PC-3 (cell line): ENCODE measurements at regions of chr2 and their contacts with region 1.

Region 1: DNA sequence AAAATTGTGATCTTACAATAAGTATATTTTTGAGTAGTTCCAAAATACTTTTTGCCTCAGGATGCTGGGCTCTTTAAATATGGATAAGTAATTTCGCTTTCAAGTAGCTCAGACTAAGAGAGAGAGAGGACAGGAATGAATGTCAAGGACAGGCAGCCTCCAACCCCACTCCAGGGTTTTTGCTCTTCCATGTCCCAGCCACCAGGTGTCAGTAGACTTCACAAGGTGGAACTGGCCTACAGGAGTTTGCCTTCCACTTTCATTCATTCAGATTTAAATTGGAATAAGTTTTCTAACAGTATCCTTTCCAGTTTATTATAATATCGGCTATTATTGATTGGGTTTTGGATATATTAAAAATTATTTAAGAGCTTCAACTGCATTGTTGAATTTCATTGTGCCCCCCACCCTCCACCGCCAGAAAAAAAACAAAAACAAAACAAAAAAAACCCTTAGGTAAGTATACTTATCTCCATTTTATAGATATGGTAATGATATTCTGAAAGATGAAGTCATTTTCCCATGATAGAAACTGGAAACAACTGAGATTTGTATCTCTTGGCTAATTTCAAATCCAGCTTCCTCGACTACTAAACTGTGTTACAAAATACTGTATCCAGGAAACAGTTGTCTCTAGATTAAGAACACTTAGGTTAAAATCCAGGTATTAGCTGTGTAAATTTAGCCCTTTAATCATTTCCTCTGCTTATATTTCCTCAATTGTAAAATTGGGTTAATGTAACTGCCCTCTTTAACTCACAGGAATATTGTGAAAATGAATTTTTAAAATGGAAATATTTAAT is 793.1 kb downstream of the ERBB4 start:
- DNase-seq: peak; percentile 75
- ATAC-seq: peak; percentile 78
- H3K4me3 ChIP-seq: no peak overlapping the region
- H3K27ac ChIP-seq: no peak overlapping the region
- H3K4me1 ChIP-seq: no peaks in the 10 kb centered on the region
- H3K27me3 ChIP-seq: no peaks in the 10 kb centered on the region
- CTCF ChIP-seq: peak; percentile 87

Region 2: GRCh38 chr2:211709389-211709788 is 36.1 kb before region 1 on chr2:
- CTCF ChIA-PET with region 1: no interaction called
- POLR2A ChIA-PET with region 1: no interaction called
- intact Hi-C with region 1: no loop called
- DNase-seq: no peak
- ATAC-seq: no peak
- H3K4me3 ChIP-seq: no peak overlapping the region
- H3K27ac ChIP-seq: no peak overlapping the region
- H3K4me1 ChIP-seq: no peaks in the 10 kb centered on the region
- H3K27me3 ChIP-seq: no peaks in the 10 kb centered on the region
- CTCF ChIP-seq: no peak

Region 3: GRCh38 chr2:211822686-211823335 is 77.3 kb after region 1 on chr2:
- CTCF ChIA-PET with region 1: no interaction called
- POLR2A ChIA-PET with region 1: no interaction called
- intact Hi-C with region 1: loop called (anchors 5 kb)
- DNase-seq: peak; percentile 76
- ATAC-seq: peak; percentile 93
- H3K4me3 ChIP-seq: no peak overlapping the region
- H3K27ac ChIP-seq: peak overlapping the region; percentile 49
- H3K4me1 ChIP-seq: peaks cover 6% of the 10 kb centered on the region; the same call in 1 of the 2 replicates
- H3K27me3 ChIP-seq: no peaks in the 10 kb centered on the region
- CTCF ChIP-seq: no peak

Region 4: GRCh38 chr2:211928201-211928600 is 182.7 kb after region 1 on chr2:
- CTCF ChIA-PET with region 1: no interaction called
- POLR2A ChIA-PET with region 1: no interaction called
- intact Hi-C with region 1: loop called (anchors 5 kb)
- DNase-seq: no peak
- ATAC-seq: no peak
- H3K4me3 ChIP-seq: no peak overlapping the region
- H3K27ac ChIP-seq: no peak overlapping the region
- H3K4me1 ChIP-seq: no peaks in the 10 kb centered on the region
- H3K27me3 ChIP-seq: no peaks in the 10 kb centered on the region
- CTCF ChIP-seq: no peak

Region 5: DNA sequence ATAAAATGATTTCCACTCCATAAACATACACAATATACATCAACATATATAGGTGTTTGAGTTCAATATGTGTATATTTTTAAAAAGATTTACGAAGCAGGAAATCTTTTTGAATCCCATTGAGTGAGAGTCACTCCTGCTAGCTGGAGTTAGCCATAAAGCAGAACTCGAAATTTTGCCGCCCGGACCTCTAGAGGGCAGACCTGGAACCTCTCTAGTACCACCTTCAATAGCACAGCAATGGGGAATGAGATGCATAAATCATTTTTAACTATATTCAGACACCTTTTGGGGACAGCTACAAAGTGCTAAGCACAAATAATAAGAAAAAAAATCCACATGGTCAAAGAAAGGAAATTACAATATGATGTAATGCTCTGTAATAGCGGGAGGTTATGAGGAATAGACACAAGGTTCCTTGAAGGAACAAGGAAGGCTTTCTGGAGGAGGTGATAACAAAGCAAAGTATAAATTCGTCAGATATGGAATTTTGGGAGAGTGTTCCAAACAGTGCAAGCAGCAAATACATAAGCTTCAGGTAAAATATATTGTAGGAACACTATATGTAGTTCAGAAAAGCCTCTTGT is 259.7 kb after region 1 on chr2:
- CTCF ChIA-PET with region 1: no interaction called
- POLR2A ChIA-PET with region 1: no interaction called
- intact Hi-C with region 1: loop called (anchors 5 kb)
- DNase-seq: peak; percentile 68
- ATAC-seq: peak; percentile 87
- H3K4me3 ChIP-seq: no peak overlapping the region
- H3K27ac ChIP-seq: no peak overlapping the region
- H3K4me1 ChIP-seq: no peaks in the 10 kb centered on the region
- H3K27me3 ChIP-seq: no peaks in the 10 kb centered on the region
- CTCF ChIP-seq: peak; percentile 82

Region 6: DNA sequence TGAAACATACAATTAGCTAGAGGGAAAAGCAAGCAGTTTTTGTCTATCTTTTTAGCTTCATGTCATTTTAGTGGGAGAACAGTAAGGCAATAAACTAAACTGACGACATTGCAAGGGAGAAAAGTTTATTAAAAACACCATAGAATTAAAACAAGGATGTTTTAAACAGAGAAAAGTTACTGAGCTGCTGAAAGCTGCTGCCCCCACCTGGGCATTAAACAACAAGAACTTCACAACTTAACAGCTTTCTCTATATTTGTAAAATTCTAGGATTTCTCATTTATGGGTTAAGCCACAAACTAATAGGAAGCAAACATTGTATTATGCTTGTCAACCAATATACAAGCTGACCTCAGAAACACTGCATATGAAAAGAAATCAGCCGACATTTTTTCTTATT is 504.0 kb after region 1 on chr2:
- CTCF ChIA-PET with region 1: interaction called, 3 read pairs
- POLR2A ChIA-PET with region 1: interaction called, 3 read pairs
- intact Hi-C with region 1: loop called (anchors 1 kb)
- DNase-seq: peak; percentile 5
- ATAC-seq: no peak; the same call in 1 of the 2 replicates
- H3K4me3 ChIP-seq: no peak overlapping the region
- H3K27ac ChIP-seq: no peak overlapping the region
- H3K4me1 ChIP-seq: no peaks in the 10 kb centered on the region
- H3K27me3 ChIP-seq: no peaks in the 10 kb centered on the region; the same call in 1 of the 2 replicates
- CTCF ChIP-seq: peak; percentile 60